IMR-90 (cell line): ENCODE measurements at regions of chr20 and their contacts with region 1.

Region 1: GRCh38 chr20:51854908-51855307 is 52.6 kb upstream of the SALL4 start:
- DNase-seq: no peak
- ATAC-seq: no peak
- H3K4me3 ChIP-seq: no peak overlapping the region
- H3K27ac ChIP-seq: no peak overlapping the region
- H3K4me1 ChIP-seq: no peaks in the 10 kb centered on the region
- H3K27me3 ChIP-seq: peaks cover 6% of the 10 kb centered on the region
- CTCF ChIP-seq: no peak
- POLR2A ChIP-seq: no peak
- RAD21 ChIP-seq: no peak

Region 2: GRCh38 chr20:51732096-51732791 is 122.7 kb before region 1 on chr20:
- CTCF ChIA-PET with region 1: no interaction called
- POLR2A ChIA-PET with region 1: no interaction called
- dilution Hi-C with region 1: no loop called
- in situ Hi-C with region 1: no loop called
- intact Hi-C with region 1: no loop called
- DNase-seq: peak; percentile 67
- ATAC-seq: peak; percentile 81
- H3K4me3 ChIP-seq: no peak overlapping the region
- H3K27ac ChIP-seq: peak overlapping the region; percentile 71; the same call in 1 of the 2 replicates
- H3K4me1 ChIP-seq: peaks cover 14% of the 10 kb centered on the region
- H3K27me3 ChIP-seq: no peaks in the 10 kb centered on the region
- CTCF ChIP-seq: no peak
- POLR2A ChIP-seq: no peak
- RAD21 ChIP-seq: no peak

Region 3: GRCh38 chr20:51871867-51872304 is 17.0 kb after region 1 on chr20:
- CTCF ChIA-PET with region 1: interaction called, 3 read pairs
- POLR2A ChIA-PET with region 1: interaction called, 23 read pairs
- dilution Hi-C with region 1: no loop called
- in situ Hi-C with region 1: no loop called
- intact Hi-C with region 1: no loop called
- DNase-seq: no peak
- ATAC-seq: no peak
- H3K4me3 ChIP-seq: no peak overlapping the region
- H3K27ac ChIP-seq: no peak overlapping the region
- H3K4me1 ChIP-seq: no peaks in the 10 kb centered on the region
- H3K27me3 ChIP-seq: peaks cover 7% of the 10 kb centered on the region
- CTCF ChIP-seq: no peak
- POLR2A ChIP-seq: no peak
- RAD21 ChIP-seq: no peak